ENCODE measurements at regions of chr1 and their contacts with region 1.

Region 1: DNA sequence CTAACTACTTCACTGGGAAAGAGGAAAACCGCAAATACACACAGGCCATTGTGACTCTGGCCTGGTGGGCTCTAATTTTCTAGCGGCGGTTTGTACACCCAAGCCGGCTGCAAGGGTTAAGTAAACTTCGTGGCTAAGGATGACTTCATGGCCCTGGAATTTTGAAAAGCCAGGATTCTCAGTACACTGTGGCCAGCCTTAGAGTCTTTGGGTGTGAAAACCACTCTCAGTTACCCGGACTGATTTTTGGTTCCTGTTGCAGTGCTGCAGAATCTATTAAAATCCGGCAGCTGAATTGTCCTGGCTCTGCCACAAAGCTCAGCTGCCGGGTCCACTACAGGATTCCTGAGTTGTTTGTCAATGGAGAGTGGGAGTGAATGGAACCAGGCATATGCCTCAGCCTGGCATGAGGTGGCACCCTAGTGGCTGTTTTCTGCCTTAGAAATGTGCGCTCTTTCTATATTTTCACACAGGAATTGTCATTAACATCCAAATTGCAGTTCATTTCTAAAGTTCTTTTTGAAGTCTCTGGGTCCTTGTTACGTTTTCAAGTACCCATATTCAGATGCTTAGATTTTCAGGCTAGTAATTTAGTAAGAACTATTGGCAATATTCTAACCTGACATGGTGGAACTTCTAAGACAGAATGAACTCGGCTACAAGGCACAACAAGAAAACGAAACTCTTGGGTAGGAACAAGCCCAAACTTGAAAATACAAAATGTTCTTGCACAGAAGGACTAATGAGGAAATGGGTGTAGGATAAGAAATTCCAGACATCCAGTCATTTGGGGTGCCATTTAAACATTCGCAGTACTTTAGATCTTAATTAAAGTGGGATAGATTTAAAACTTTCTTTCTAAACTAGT is 255.9 kb downstream of the NFIA start:
- DNase-seq: peak; percentile 84
- ATAC-seq: peak; percentile 91
- H3K4me3 ChIP-seq: peak overlapping the region in 1 of 2 donors; percentile 48
- H3K27ac ChIP-seq: peak overlapping the region; percentile 94 to 99
- H3K4me1 ChIP-seq: peaks cover 4% of the 10 kb centered on the region in 2 donors
- H3K27me3 ChIP-seq: no peaks in the 10 kb centered on the region

Region 2: GRCh38 chr1:61077676-61078541 is 260.3 kb before region 1 on chr1:
- intact Hi-C with region 1: loop called (anchors 5 kb)
- DNase-seq: peak; percentile 92 to 96
- ATAC-seq: peak; percentile 83
- H3K4me3 ChIP-seq: peak overlapping the region; percentile 46 to 58
- H3K27ac ChIP-seq: peak overlapping the region in 1 of 2 donors; percentile 33
- H3K4me1 ChIP-seq: no peaks in the 10 kb centered on the region
- H3K27me3 ChIP-seq: no peaks in the 10 kb centered on the region

Region 3: GRCh38 chr1:61184040-61184713 is 154.0 kb before region 1 on chr1:
- intact Hi-C with region 1: loop called in 1 of 2 experiments (anchors 5 kb)
- DNase-seq: peak; percentile 94 to 97
- ATAC-seq: peak; percentile 93
- H3K4me3 ChIP-seq: peak overlapping the region; percentile 8 to 71
- H3K27ac ChIP-seq: peak overlapping the region; percentile 69 to 86
- H3K4me1 ChIP-seq: peaks cover 4 to 11% of the 10 kb centered on the region in 2 donors
- H3K27me3 ChIP-seq: no peaks in the 10 kb centered on the region

Region 4: DNA sequence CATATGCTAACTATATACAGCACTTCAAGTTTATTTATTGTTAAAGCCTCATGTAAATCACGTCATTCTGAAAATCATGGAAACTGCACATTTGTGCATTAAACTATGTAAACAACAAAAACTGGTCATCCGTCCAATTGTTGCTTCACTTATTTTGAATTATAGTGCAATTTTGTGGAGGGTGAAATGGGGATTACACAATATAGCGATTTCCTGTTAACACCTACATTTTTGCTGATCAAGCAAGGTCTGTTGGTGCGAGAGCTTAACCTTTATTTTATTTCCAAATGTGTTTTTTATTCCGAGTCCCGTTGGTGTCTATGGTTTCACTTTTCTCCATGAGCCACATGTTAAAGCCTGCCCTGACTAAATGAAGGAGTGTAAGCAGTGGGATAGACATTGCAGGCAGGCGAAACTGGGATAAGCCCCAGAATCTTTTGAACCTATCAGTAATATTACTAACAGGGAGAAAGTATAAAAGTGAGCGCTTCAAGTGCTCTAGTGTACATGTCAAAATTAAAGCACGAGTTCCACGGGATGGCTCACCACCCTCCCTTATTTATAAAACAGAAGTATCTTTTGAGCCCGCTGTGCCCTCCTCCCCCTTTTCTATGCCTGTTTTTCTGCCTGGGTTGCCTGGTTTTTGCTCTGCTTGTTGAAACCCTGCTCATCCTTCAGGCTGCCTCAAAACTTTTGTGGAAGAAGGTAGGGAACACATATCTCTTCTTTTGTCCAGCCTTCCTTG is 135.2 kb before region 1 on chr1:
- intact Hi-C with region 1: loop called in 1 of 2 experiments (anchors 10 kb)
- DNase-seq: no peak
- ATAC-seq: no peak
- H3K4me3 ChIP-seq: no peak overlapping the region
- H3K27ac ChIP-seq: peak overlapping the region in 1 of 2 donors; percentile 37
- H3K4me1 ChIP-seq: peaks cover 3 to 5% of the 10 kb centered on the region in 2 donors
- H3K27me3 ChIP-seq: no peaks in the 10 kb centered on the region

Region 5: DNA sequence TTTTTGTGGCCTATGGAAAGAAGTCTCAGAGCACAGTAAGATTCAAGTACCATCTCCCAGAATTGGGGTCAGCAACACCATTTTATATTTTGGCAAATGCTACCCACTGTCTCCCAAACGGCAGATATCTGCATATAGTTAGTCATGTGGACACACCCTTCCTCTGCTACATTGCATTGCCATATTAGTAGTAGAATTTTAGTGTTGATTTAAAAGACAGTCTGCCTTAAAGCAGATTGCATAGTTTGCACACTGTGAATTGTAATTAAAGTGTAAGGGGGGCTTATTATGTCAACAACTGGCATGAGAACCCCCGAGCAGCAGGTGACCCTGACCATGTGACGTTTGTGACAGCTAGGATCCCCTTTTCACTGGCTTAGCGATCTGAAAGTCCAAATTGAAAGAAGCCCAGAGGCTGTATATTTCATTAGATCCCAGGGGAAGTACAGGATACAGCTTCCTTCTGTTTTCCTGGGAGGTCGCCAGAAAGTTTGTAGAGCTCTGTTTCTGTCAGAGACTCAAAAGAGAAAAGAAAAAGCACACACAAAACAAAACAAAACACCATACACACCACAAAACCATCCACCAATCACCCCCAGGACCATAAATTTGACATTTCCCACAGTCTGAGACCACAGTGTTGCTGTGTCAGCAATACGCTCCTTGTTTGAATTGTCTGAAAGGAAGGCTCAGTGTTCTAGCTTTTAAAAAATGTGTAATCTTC is 83.4 kb before region 1 on chr1:
- intact Hi-C with region 1: loop called in 1 of 2 experiments (anchors 5 kb)
- DNase-seq: peak in 1 of 2 donors; percentile 43
- ATAC-seq: peak; percentile 54
- H3K4me3 ChIP-seq: peak overlapping the region in 1 of 2 donors; percentile 20
- H3K27ac ChIP-seq: peak overlapping the region in 1 of 2 donors; percentile 67
- H3K4me1 ChIP-seq: peaks cover 7 to 15% of the 10 kb centered on the region in 2 donors
- H3K27me3 ChIP-seq: no peaks in the 10 kb centered on the region

Region 6: GRCh38 chr1:61287734-61288133 is 50.5 kb before region 1 on chr1:
- intact Hi-C with region 1: loop called (anchors 5 kb)
- DNase-seq: no peak
- ATAC-seq: peak; percentile 33
- H3K4me3 ChIP-seq: no peak overlapping the region
- H3K27ac ChIP-seq: peak overlapping the region; percentile 40 to 67
- H3K4me1 ChIP-seq: peaks cover 10 to 31% of the 10 kb centered on the region in 2 donors
- H3K27me3 ChIP-seq: no peaks in the 10 kb centered on the region